Activated CD8-positive, alpha-beta T cell treated with anti-CD3 and anti-CD28 coated beads for 36 hours (primary cell): ENCODE measurements at regions of chr13 and their contacts with region 1.

Region 1: DNA sequence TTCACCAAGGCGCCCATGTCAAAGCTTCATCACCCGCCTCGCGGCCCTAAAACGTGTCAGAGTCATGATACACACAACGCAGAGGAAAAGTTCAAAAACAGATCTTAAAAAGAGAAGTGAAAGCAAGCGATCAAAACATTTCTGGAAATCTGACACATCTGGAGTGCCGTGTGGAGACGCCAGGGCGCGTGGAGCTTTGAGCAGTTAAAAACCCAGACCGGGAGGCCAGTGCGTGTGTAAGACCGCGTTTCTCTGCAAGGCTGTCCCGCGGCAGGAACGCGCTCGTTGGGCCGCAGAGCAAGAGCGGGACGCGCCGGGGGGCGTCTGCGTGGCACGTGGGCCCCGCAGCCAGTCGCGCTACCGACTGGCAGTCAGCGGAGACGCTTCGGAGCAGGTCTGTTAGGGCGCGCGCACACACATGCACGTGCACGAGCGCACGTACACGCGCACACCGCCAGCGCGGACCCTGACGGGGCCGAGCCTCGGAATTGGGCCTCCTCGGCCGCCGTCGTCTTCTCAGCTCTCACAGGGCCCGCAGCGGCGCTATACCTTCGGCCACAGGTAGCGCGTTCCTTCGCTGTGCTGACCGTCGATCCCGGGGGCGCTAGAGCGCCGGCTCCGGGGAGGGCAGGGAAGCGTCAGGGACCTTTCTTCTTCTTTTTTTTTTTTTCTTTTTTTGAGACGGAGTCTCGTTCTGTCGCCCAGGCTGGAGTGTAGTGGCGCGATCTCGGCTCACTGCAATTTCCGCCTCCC is 35.8 kb downstream of the RNF6 start:
- DNase-seq: peak; percentile 93
- ATAC-seq: peak; percentile 88
- H3K4me3 Mint-ChIP-seq: peak overlapping the region; percentile 78
- H3K27ac Mint-ChIP-seq: peak overlapping the region; percentile 89
- H3K4me1 Mint-ChIP-seq: peaks cover 28% of the 10 kb centered on the region
- H3K27me3 Mint-ChIP-seq: no peaks in the 10 kb centered on the region
- CTCF ChIP-seq: peak; percentile 49

Region 2: DNA sequence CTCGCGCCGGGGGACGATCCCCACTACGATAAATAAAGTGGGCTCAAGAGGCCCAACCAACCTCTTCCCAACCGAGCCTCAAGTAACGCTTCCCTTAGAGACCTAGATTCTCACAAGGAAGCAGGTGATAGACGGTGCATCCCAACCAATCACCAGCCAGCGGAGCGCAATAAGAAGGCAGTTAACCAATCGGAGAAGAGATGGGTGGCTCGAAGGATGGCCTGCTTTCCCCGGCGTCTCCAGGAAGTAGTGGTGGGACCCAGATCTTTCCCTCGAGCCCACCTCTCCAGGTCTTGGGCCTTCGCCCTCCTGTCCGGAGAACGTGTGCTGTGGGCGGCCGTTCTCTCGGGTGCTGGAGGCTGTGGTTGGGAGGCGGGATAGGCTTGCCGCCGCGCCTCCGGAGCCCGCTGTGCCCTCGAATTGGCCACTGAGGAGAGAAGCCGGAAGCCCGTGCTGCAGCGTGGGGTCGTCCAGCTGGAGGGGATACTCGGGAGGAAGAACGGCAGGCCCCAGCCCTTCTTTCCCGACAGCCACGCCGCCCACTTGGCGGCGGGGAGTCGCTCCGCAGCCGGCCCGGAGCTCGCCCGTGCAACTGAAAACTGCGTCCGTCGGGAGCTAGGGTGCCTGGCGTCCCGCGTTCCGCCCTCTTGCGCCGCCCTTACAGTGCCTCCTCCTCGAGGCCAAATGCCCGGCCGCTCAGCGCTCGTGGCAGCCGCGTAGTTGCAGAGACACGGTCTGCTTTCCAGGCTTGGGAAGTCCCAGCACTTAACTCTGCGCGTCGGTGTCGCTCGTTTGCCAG is 35.6 kb after region 1 on chr13 and contains the start of gene RNF6:
- CTCF ChIA-PET with region 1: interaction called, 32 read pairs
- POLR2A ChIA-PET with region 1: interaction called, 8 read pairs
- intact Hi-C with region 1: no loop called
- DNase-seq: peak; percentile 94
- ATAC-seq: peak; percentile 96
- H3K4me3 Mint-ChIP-seq: peak within 1 kb of the TSS; percentile 100
- H3K27ac Mint-ChIP-seq: peak within 1 kb of the TSS; percentile 100
- H3K4me1 Mint-ChIP-seq: peaks cover 39% of the 10 kb centered on the region
- H3K27me3 Mint-ChIP-seq: no peaks in the 10 kb centered on the region
- CTCF ChIP-seq: no peak
- total RNA-seq, gene RNF6: 36.2 TPM

Region 3: GRCh38 chr13:26377038-26377437 is 190.7 kb after region 1 on chr13:
- CTCF ChIA-PET with region 1: interaction called, 20 read pairs
- POLR2A ChIA-PET with region 1: no interaction called
- intact Hi-C with region 1: no loop called
- DNase-seq: peak; percentile 21
- ATAC-seq: peak; percentile 45
- H3K4me3 Mint-ChIP-seq: no peak overlapping the region
- H3K27ac Mint-ChIP-seq: no peak overlapping the region
- H3K4me1 Mint-ChIP-seq: peaks cover 27% of the 10 kb centered on the region
- H3K27me3 Mint-ChIP-seq: no peaks in the 10 kb centered on the region
- CTCF ChIP-seq: no peak

Region 4: GRCh38 chr13:26482451-26483197 is 296.3 kb after region 1 on chr13:
- CTCF ChIA-PET with region 1: interaction called, 11 read pairs
- POLR2A ChIA-PET with region 1: interaction called, 3 read pairs
- intact Hi-C with region 1: no loop called
- DNase-seq: peak; percentile 80
- ATAC-seq: peak; percentile 97
- H3K4me3 Mint-ChIP-seq: no peak overlapping the region
- H3K27ac Mint-ChIP-seq: no peak overlapping the region
- H3K4me1 Mint-ChIP-seq: peaks cover 11% of the 10 kb centered on the region
- H3K27me3 Mint-ChIP-seq: no peaks in the 10 kb centered on the region
- CTCF ChIP-seq: peak; percentile 91

Region 5: GRCh38 chr13:26502826-26503225 is 316.5 kb after region 1 on chr13:
- CTCF ChIA-PET with region 1: interaction called, 112 read pairs
- POLR2A ChIA-PET with region 1: interaction called, 3 read pairs
- intact Hi-C with region 1: no loop called
- DNase-seq: peak; percentile 52
- ATAC-seq: peak; percentile 93
- H3K4me3 Mint-ChIP-seq: no peak overlapping the region
- H3K27ac Mint-ChIP-seq: no peak overlapping the region
- H3K4me1 Mint-ChIP-seq: peaks cover 13% of the 10 kb centered on the region
- H3K27me3 Mint-ChIP-seq: peaks cover under 1% of the 10 kb centered on the region
- CTCF ChIP-seq: peak; percentile 32

Region 6: DNA sequence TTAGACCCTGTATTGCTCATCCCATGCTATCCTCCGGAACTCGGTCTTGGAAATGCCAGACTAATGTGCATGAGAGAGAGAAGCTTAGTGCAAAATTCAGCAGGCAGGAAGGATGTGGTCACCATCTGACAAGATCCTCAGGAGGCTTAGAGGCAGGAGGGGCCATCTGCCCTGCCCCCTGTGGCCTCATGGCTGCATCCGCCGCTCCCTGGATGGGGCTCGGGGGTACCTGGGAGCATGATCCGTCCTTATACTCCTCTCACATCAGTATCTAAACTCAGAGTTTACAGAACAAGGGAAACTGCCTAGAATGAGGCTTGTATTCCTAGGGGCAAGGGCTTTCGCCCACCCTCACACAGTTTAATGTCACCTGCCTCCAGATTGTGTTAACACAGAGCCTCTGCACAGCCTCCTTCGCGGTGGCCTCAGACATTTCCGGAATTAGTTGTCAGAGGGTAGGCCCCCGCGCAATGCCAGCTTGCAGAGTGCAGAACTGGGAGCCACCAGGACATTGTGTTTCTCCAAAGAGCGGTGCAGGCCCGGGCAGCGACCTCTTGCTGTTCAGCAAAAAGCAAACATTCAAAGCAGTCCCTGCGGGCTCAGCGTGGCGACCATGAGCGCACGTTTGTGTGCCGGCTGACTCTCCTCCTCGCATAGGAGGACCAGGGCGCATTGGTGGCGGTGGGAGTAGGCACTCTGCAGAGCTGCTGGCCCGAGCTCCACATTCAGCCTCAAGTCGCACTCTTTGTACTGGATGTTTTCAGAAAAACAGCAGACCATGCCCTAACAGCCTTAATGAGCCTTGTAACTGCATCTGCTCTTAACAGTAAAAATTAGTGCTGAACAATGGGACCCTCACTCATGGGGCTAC is 535.2 kb after region 1 on chr13:
- CTCF ChIA-PET with region 1: interaction called, 3 read pairs
- POLR2A ChIA-PET with region 1: interaction called, 10 read pairs
- intact Hi-C with region 1: no loop called
- DNase-seq: peak; percentile 71
- ATAC-seq: peak; percentile 90
- H3K4me3 Mint-ChIP-seq: peak overlapping the region; percentile 66
- H3K27ac Mint-ChIP-seq: peak overlapping the region; percentile 88
- H3K4me1 Mint-ChIP-seq: peaks cover 27% of the 10 kb centered on the region
- H3K27me3 Mint-ChIP-seq: no peaks in the 10 kb centered on the region
- CTCF ChIP-seq: no peak